K562 (cell line): ENCODE measurements at regions of chr17 and their contacts with region 1.

Region 1: GRCh38 chr17:28828294-28829040 is 14.1 kb downstream of the FAM222B start:
- DNase-seq: no peak
- ATAC-seq: peak; percentile 30
- H3K4me3 ChIP-seq: no peak overlapping the region
- H3K27ac ChIP-seq: no peak overlapping the region
- H3K4me1 ChIP-seq: peaks cover 12 to 20% of the 10 kb centered on the region in 2 experiments; a peak in 4 of 5 replicates
- H3K27me3 ChIP-seq: no peaks in the 10 kb centered on the region
- CTCF ChIP-seq: no peak
- EP300 ChIP-seq: no peak
- POLR2A ChIP-seq: 0 out of 2 replicates have a peak, but pooled peaks have one; percentile 36
- RAD21 ChIP-seq: no peak

Region 2: DNA sequence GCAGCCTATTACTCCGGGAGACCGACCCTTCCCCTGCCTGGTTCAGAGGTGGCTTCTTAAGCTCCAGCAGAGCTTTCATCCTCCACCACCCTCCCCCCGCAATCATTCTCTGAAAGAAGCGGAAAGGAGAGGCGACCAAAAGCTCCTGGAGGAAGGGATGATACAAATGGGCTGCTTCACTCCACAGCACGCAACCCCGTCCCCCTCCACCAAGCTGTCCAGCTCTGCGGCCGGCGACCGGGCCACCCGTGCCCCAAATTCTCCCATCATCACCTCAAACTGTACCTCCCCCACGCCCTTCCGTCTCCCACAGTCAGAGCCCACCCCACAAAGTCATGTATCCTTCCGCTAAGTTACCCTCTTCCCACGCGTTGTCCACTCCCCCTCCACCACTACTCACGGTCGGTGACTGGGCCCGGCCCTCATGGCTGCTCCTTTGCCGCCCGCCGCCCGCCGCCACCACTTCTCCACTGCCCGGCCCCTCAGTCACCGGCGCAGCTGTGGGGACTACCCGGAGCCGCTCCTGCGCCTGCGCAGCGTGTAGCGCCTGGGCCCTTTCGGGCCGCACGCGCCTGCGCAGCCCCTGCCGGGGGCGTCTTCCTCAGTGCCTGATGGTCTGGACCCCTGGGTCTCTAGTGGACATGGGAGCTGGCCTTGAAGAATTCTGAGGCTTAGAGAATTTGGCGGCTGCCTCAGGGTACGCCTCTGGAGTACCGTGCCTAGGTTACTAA is 14.0 kb after region 1 on chr17 and contains the start of gene FAM222B:
- CTCF ChIA-PET with region 1: no interaction called
- POLR2A ChIA-PET with region 1: interaction called, 27 read pairs
- in situ Hi-C with region 1: no loop called
- intact Hi-C with region 1: no loop called
- DNase-seq: peak; percentile 95 to 100 (median 99)
- ATAC-seq: peak; percentile 97
- H3K4me3 ChIP-seq: peak within 1 kb of the TSS; percentile 71
- H3K27ac ChIP-seq: peak within 1 kb of the TSS; percentile 76
- H3K4me1 ChIP-seq: peaks cover 17 to 33% of the 10 kb centered on the region in 2 experiments
- H3K27me3 ChIP-seq: no peaks in the 10 kb centered on the region
- CTCF ChIP-seq: no peak
- EP300 ChIP-seq: no peak
- POLR2A ChIP-seq: peak; percentile 95
- RAD21 ChIP-seq: no peak; a peak in 1 of 4 replicates
- polyA plus RNA-seq, gene FAM222B: 4.0 to 6.7 TPM

Region 3: GRCh38 chr17:28949185-28950016 is 120.9 kb after region 1 on chr17:
- CTCF ChIA-PET with region 1: no interaction called
- POLR2A ChIA-PET with region 1: no interaction called
- in situ Hi-C with region 1: no loop called
- intact Hi-C with region 1: no loop called
- DNase-seq: peak; percentile 37 to 69 (median 56)
- ATAC-seq: peak; percentile 15; the same call in 2 of the 3 replicates
- H3K4me3 ChIP-seq: peak overlapping the region; percentile 61
- H3K27ac ChIP-seq: peak overlapping the region; percentile 72
- H3K4me1 ChIP-seq: peaks cover 18 to 21% of the 10 kb centered on the region in 2 experiments
- H3K27me3 ChIP-seq: no peaks in the 10 kb centered on the region
- CTCF ChIP-seq: no peak
- EP300 ChIP-seq: no peak
- POLR2A ChIP-seq: no peak
- RAD21 ChIP-seq: no peak